Lower lobe of right lung (tissue), 2 donors: ENCODE measurements at regions of chr4 and their contacts with region 1.

Region 1: DNA sequence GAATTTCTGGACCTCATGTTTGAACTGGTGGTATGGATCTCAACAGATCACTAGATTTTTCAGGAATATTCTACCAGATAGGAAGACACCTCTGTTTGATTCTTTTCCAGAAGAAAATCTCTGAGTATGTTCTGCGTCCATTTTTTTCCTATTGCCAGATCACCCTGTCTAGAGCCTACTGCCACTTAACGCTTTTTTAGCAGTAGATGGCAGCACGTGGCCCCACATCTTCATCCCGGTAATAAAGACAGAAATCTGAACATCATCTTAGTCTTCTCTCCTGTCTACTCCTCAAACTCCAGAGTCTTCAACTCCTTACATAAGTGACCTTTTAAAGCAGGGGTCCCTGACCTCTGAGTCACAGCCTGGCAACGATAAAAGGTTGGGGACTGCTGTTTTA is 184.7 kb downstream of the TMA16 start:
- DNase-seq: no peak
- ATAC-seq: no peak
- H3K4me3 ChIP-seq: no peak overlapping the region
- H3K27ac ChIP-seq: no peak overlapping the region
- H3K4me1 ChIP-seq: no peaks in the 10 kb centered on the region
- H3K27me3 ChIP-seq: no peaks in the 10 kb centered on the region
- CTCF ChIP-seq: no peak

Region 2: GRCh38 chr4:163554870-163555465 is 124.2 kb before region 1 on chr4:
- intact Hi-C with region 1: loop called (anchors 10 kb)
- DNase-seq: no peak
- ATAC-seq: no peak
- H3K4me3 ChIP-seq: no peak overlapping the region
- H3K27ac ChIP-seq: no peak overlapping the region
- H3K4me1 ChIP-seq: peaks cover 35% of the 10 kb centered on the region
- H3K27me3 ChIP-seq: no peaks in the 10 kb centered on the region
- CTCF ChIP-seq: peak; percentile 69